H1 (cell line): ENCODE measurements at regions of chr3 and their contacts with region 1.

Region 1: GRCh38 chr3:158727206-158728060 is 4.8 kb downstream of the RARRES1 start:
- DNase-seq: no peak
- H3K4me3 ChIP-seq: no peak overlapping the region
- H3K27ac ChIP-seq: no peak overlapping the region
- H3K4me1 ChIP-seq: peaks cover 0 to 9% (median 6%) of the 10 kb centered on the region in 4 experiments; a peak in 5 of 7 replicates
- H3K27me3 ChIP-seq: peaks cover 0 to 11% (median 6%) of the 10 kb centered on the region in 4 experiments; a peak in 6 of 7 replicates
- CTCF ChIP-seq: peak in 2 of 3 experiments; percentile 60 to 83; a peak in 3 of 4 replicates
- EP300 ChIP-seq: no peak
- POLR2A ChIP-seq: no peak
- RAD21 ChIP-seq: peak; percentile 62 to 67

Region 2: DNA sequence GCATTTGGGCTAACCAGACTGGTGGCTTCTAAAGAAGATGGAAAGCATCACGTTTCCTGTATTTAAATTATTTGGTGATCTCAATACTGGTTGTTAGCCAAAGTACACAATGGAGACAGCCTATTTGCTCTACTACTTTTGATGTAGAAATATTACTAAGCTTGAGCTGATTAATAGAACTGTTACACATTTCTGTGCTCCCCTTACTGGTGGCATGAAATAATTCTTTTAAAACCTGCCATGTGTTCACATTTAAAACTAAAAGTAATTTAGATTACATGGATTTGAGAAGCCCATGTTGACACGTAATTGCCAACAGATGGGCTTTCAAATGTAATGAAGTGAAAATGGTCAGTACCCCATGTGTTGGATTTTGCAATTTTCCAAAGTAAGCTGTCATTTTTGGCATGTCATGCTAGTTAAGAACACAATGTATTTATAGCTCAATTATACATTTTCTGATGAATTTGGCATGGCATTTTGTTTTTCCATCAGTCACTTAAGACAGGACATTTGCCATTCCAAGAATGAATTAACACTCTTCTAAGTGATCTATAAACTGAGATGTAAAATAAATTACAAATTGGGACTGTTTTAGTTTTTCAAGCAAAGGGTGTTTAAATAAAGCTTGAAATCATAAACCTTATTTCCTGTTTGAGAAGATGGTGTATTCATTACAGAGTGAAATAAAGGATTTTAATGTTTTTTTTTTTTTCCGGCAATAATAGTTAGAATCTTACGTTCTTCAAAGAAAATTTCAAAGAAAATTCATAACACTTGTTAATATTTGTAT is 15.6 kb after region 1 on chr3:
- CTCF ChIA-PET with region 1: interaction called, 30 read pairs
- POLR2A ChIA-PET with region 1: interaction called, 4 read pairs
- DNase-seq: no peak
- H3K4me3 ChIP-seq: no peak overlapping the region
- H3K27ac ChIP-seq: no peak overlapping the region
- H3K4me1 ChIP-seq: no peaks in the 10 kb centered on the region
- H3K27me3 ChIP-seq: no peaks in the 10 kb centered on the region
- CTCF ChIP-seq: no peak
- EP300 ChIP-seq: no peak
- POLR2A ChIP-seq: no peak
- RAD21 ChIP-seq: no peak

Region 3: DNA sequence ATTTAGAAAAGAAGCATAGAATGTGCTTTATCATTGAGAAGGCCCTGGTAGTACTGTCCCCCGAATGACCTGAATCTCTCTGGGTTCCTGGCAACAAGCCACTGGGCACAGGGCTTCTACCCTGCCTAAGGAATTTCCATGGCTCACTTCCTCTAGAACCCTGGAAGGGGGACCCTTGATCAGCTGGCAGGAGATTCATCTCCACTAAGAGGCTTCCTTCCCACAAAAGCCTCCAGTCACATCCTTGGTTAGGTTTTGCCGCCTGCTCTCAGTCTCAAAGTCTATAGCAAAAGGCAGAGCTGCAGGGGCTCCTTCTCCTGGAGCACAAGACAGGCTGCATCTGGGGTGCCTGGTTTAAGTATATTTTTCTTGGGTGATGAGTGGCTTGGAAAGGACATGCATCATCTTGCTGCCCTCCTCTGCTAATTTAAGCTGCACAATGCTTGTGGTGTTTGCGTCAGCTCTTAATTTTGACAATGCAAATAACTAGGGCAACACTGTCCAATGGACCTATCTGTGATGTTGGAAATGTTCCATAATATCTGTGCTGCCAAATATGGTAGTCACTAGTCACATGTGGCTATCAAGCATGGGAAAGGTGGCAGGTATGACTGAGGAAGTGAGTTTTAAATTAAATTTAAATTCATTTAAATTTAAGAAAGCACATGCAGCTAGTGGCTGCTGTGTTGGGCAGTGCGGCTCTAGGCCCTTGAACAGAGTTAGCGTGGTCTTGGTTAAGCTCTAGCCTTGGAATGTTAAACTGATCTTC is 38.3 kb after region 1 on chr3:
- CTCF ChIA-PET with region 1: interaction called, 21 read pairs
- POLR2A ChIA-PET with region 1: no interaction called
- DNase-seq: no peak
- H3K4me3 ChIP-seq: no peak overlapping the region
- H3K27ac ChIP-seq: no peak overlapping the region
- H3K4me1 ChIP-seq: peaks cover 3 to 7% (median 7%) of the 10 kb centered on the region in 4 experiments; a peak in 4 of 7 replicates
- H3K27me3 ChIP-seq: no peaks in the 10 kb centered on the region
- CTCF ChIP-seq: no peak
- EP300 ChIP-seq: no peak
- POLR2A ChIP-seq: no peak
- RAD21 ChIP-seq: no peak

Region 4: DNA sequence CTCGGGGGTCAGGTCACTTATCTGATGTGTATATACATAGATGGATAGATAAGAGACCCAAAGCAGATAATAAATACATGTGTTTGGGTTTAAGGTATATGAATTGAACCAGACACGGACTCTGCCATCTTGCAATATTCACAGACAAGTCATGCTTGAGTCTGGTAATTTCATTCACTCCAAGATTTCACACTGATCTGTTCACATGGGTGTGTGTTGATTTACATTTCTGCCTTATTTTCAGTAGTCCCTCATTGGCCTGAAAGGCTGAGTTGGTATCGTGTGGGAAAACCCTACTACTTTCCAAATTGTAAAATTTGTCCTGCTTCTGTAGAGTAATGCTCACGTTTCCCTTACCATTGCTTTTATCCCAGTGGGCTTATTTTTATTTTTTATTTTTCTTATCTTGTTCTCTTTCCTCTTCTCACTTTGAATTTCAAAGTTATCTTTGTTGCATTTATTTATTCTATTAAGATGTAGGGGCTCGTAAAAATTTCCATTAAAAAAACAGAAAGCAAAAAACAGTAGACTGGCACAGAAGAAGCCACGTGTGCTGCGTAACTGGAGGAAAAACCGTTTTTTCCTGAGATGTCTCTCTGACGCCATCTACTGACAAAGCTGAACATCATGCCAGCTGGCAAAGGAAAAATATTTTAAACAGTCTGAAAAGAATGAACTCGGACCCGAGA is 63.6 kb after region 1 on chr3:
- CTCF ChIA-PET with region 1: interaction called, 110 read pairs
- POLR2A ChIA-PET with region 1: no interaction called
- DNase-seq: no peak
- H3K4me3 ChIP-seq: no peak overlapping the region
- H3K27ac ChIP-seq: no peak overlapping the region
- H3K4me1 ChIP-seq: no peaks in the 10 kb centered on the region
- H3K27me3 ChIP-seq: no peaks in the 10 kb centered on the region
- CTCF ChIP-seq: peak; percentile 20 to 87 (median 76)
- EP300 ChIP-seq: no peak
- POLR2A ChIP-seq: no peak
- RAD21 ChIP-seq: peak; percentile 86 to 88

Region 5: GRCh38 chr3:158925021-158925420 is 197.6 kb after region 1 on chr3:
- CTCF ChIA-PET with region 1: no interaction called
- POLR2A ChIA-PET with region 1: no interaction called
- DNase-seq: no peak
- H3K4me3 ChIP-seq: no peak overlapping the region
- H3K27ac ChIP-seq: no peak overlapping the region
- H3K4me1 ChIP-seq: no peaks in the 10 kb centered on the region
- H3K27me3 ChIP-seq: no peaks in the 10 kb centered on the region
- CTCF ChIP-seq: no peak
- EP300 ChIP-seq: no peak
- POLR2A ChIP-seq: no peak
- RAD21 ChIP-seq: no peak

Region 6: GRCh38 chr3:159032311-159032710 is 304.9 kb after region 1 on chr3:
- CTCF ChIA-PET with region 1: no interaction called
- POLR2A ChIA-PET with region 1: no interaction called
- DNase-seq: no peak
- H3K4me3 ChIP-seq: no peak overlapping the region
- H3K27ac ChIP-seq: no peak overlapping the region
- H3K4me1 ChIP-seq: no peaks in the 10 kb centered on the region
- H3K27me3 ChIP-seq: no peaks in the 10 kb centered on the region
- CTCF ChIP-seq: no peak
- EP300 ChIP-seq: no peak
- POLR2A ChIP-seq: no peak
- RAD21 ChIP-seq: no peak